HCT116 (cell line): ENCODE measurements at regions of chr20 and their contacts with region 1.

Region 1: DNA sequence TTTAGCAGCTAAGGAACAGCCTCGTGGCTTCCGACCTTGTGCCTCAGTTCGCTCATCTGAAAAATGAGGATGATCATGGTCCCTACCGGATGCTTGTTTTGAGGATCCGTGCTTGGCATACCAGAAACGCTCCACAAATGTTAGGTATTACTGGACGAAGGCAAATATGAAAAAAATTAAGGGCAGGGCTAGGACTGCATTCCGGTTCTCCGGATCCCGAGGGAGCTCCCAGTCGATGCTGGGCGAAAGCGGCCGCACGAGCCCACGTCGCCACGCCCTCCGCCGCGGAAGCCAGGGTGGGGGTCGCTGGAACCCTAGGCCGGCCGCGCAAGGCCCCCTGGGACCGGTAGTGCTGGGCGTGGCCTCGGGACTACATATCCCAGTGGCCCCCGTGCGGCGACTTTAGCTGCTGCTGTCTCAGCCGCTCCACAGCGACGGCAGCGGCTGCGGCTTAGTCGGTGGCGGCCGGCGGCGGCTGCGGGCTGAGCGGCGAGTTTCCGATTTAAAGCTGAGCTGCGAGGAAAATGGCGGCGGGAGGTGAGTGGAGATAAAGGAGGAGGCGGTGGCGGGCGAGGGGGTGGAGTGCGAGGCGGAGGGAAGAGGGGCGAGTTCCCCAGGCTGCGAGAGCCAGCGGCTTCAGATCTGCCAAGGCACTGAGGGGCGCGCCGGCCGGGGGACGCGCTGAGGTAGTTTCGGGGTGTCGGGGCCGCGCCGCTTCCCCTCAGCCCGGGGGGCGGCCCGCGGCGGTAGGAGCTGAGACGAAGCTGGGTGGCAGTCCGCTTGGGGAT is at the start of gene NCOA3:
- DNase-seq: peak; percentile 82
- ATAC-seq: peak; percentile 97
- H3K4me3 ChIP-seq: peak within 1 kb of the TSS; percentile 86 to 87
- H3K27ac ChIP-seq: peak within 1 kb of the TSS; percentile 70
- H3K4me1 ChIP-seq: peaks cover 19 to 30% of the 10 kb centered on the region in 2 experiments; a peak in 3 of 4 replicates
- H3K27me3 ChIP-seq: no peaks in the 10 kb centered on the region
- CTCF ChIP-seq: peak in 2 of 3 experiments; percentile 8 to 32; a peak in 2 of 6 replicates
- POLR2A ChIP-seq: peak; percentile 94
- RAD21 ChIP-seq: peak; percentile 42; the same call in 1 of the 2 replicates
- total RNA-seq, gene NCOA3: 25.9 TPM

Region 2: GRCh38 chr20:46757754-46758678 is 743.7 kb before region 1 on chr20:
- CTCF ChIA-PET with region 1: no interaction called
- POLR2A ChIA-PET with region 1: no interaction called
- RAD21 ChIA-PET with region 1: no interaction called
- intact Hi-C with region 1: no loop called
- DNase-seq: peak; percentile 48
- ATAC-seq: peak; percentile 84
- H3K4me3 ChIP-seq: no peak overlapping the region
- H3K27ac ChIP-seq: no peak overlapping the region
- H3K4me1 ChIP-seq: no peaks in the 10 kb centered on the region; a peak in 1 of 4 replicates
- H3K27me3 ChIP-seq: no peaks in the 10 kb centered on the region
- CTCF ChIP-seq: peak; percentile 61 to 95 (median 94); a peak in 5 of 6 replicates
- POLR2A ChIP-seq: no peak
- RAD21 ChIP-seq: peak; percentile 72

Region 3: GRCh38 chr20:47164140-47164539 is 337.5 kb before region 1 on chr20:
- CTCF ChIA-PET with region 1: no interaction called
- POLR2A ChIA-PET with region 1: no interaction called
- RAD21 ChIA-PET with region 1: no interaction called
- intact Hi-C with region 1: no loop called
- DNase-seq: no peak
- ATAC-seq: no peak
- H3K4me3 ChIP-seq: no peak overlapping the region
- H3K27ac ChIP-seq: no peak overlapping the region
- H3K4me1 ChIP-seq: no peaks in the 10 kb centered on the region; a peak in 1 of 4 replicates
- H3K27me3 ChIP-seq: no peaks in the 10 kb centered on the region
- CTCF ChIP-seq: no peak
- POLR2A ChIP-seq: no peak
- RAD21 ChIP-seq: no peak

Region 4: GRCh38 chr20:47205577-47206498 is 295.8 kb before region 1 on chr20:
- CTCF ChIA-PET with region 1: no interaction called
- POLR2A ChIA-PET with region 1: interaction called, 4 read pairs
- RAD21 ChIA-PET with region 1: no interaction called
- intact Hi-C with region 1: loop called (anchors 10 kb)
- DNase-seq: peak; percentile 77
- ATAC-seq: peak; percentile 61
- H3K4me3 ChIP-seq: peak overlapping the region in 1 of 2 experiments; percentile 15; a peak in 1 of 4 replicates
- H3K27ac ChIP-seq: peak overlapping the region; percentile 74
- H3K4me1 ChIP-seq: peaks cover 57 to 66% of the 10 kb centered on the region in 2 experiments
- H3K27me3 ChIP-seq: no peaks in the 10 kb centered on the region
- CTCF ChIP-seq: peak; percentile 56 to 85 (median 81); a peak in 5 of 6 replicates
- POLR2A ChIP-seq: no peak
- RAD21 ChIP-seq: peak; percentile 70

Region 5: GRCh38 chr20:47392015-47392720 is 109.5 kb before region 1 on chr20:
- CTCF ChIA-PET with region 1: no interaction called
- POLR2A ChIA-PET with region 1: interaction called, 12 read pairs
- RAD21 ChIA-PET with region 1: interaction called in 1 of 2 experiments, 3 read pairs
- intact Hi-C with region 1: no loop called
- DNase-seq: peak; percentile 81
- ATAC-seq: peak; percentile 86
- H3K4me3 ChIP-seq: no peak overlapping the region
- H3K27ac ChIP-seq: peak overlapping the region; percentile 28; the same call in 1 of the 2 replicates
- H3K4me1 ChIP-seq: peaks cover 7 to 43% of the 10 kb centered on the region in 2 experiments
- H3K27me3 ChIP-seq: no peaks in the 10 kb centered on the region
- CTCF ChIP-seq: no peak
- POLR2A ChIP-seq: peak; percentile 16
- RAD21 ChIP-seq: no peak

Region 6: DNA sequence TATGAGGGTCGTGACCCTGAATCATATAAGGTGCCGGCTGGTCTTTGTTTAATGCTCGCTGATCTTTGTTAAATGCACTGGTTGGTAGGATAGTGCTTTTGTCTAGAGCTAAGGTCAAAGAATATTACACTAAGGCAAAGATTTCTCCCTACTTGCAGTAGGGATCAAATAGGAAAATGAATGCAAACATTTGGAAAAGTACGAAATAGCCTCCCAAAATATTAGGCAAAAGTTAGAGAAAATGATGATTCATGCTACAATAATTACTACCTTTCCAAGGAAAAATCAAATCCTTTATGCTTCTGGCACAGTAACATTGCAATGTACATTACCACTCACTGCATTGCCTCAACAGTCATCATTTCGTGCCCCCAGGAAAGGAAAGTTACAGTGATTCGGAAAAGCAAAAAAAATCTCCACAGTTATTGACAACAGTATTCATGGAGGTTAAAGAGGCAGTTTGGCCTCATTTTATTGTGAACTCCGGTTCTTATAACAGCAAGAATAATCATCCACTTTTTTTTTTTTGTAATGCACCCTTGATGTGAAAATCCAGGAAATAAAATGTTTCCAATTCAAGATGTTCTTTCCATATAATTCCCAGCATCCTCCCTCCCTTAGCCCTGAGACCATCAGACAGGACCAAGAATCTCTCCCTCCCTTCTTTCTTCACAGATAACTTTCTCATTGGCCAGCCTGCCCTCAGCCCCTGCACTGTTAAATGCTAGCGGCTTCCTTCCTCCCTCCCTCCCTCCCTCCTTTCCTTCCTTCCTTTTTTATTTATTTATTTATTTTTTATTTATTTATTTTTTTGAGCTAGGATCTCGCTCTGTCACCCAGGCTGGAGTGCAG is 83.4 kb before region 1 on chr20:
- CTCF ChIA-PET with region 1: no interaction called
- POLR2A ChIA-PET with region 1: no interaction called
- RAD21 ChIA-PET with region 1: no interaction called
- intact Hi-C with region 1: no loop called
- DNase-seq: no peak
- ATAC-seq: peak; percentile 38; the same call in 1 of the 2 replicates
- H3K4me3 ChIP-seq: no peak overlapping the region
- H3K27ac ChIP-seq: no peak overlapping the region
- H3K4me1 ChIP-seq: peaks cover 5 to 14% of the 10 kb centered on the region in 2 experiments
- H3K27me3 ChIP-seq: no peaks in the 10 kb centered on the region
- CTCF ChIP-seq: no peak
- POLR2A ChIP-seq: no peak
- RAD21 ChIP-seq: no peak

Region 7: GRCh38 chr20:47475419-47476044 is 26.1 kb before region 1 on chr20:
- CTCF ChIA-PET with region 1: no interaction called
- POLR2A ChIA-PET with region 1: interaction called, 3 read pairs
- RAD21 ChIA-PET with region 1: no interaction called
- intact Hi-C with region 1: loop called (anchors 1 kb)
- DNase-seq: no peak
- ATAC-seq: no peak
- H3K4me3 ChIP-seq: no peak overlapping the region
- H3K27ac ChIP-seq: no peak overlapping the region
- H3K4me1 ChIP-seq: no peaks in the 10 kb centered on the region
- H3K27me3 ChIP-seq: no peaks in the 10 kb centered on the region
- CTCF ChIP-seq: no peak
- POLR2A ChIP-seq: no peak
- RAD21 ChIP-seq: no peak

Region 8: DNA sequence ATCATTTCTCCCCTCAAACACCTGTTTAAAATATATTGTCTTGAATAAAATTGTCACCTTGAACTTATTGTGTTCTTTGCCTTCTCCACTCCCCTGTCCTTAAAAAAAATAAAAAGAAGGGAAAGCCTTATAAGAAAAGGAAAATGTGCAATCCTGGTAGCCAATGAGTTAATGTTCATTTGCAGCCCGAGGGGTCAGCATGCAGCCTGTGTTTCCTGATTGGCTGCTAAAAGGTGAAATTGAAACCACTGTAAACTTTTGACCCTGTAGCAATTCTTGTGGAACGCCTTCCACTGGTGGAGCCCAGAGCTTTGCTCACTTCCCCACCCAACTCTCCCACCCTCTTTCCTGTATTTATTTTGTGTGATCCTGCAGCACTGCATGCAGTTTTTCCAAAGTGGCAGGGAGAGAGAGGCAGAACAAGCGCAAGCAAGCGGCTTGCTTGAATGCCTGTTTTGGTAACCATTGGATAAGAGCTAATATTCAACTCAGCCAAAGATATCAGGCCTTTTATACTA is 74.9 kb after region 1 on chr20:
- CTCF ChIA-PET with region 1: no interaction called
- POLR2A ChIA-PET with region 1: interaction called, 4 read pairs
- RAD21 ChIA-PET with region 1: no interaction called
- intact Hi-C with region 1: loop called (anchors 5 kb)
- DNase-seq: peak; percentile 85
- ATAC-seq: peak; percentile 93
- H3K4me3 ChIP-seq: peak overlapping the region; percentile 25 to 33
- H3K27ac ChIP-seq: peak overlapping the region; percentile 78
- H3K4me1 ChIP-seq: peaks cover 62 to 75% of the 10 kb centered on the region in 2 experiments
- H3K27me3 ChIP-seq: no peaks in the 10 kb centered on the region
- CTCF ChIP-seq: no peak
- POLR2A ChIP-seq: no peak
- RAD21 ChIP-seq: peak; percentile 11; the same call in 1 of the 2 replicates